Dorsolateral prefrontal cortex (tissue), 120 donors: ENCODE measurements at regions of chr6 and their contacts with region 1.

Region 1: DNA sequence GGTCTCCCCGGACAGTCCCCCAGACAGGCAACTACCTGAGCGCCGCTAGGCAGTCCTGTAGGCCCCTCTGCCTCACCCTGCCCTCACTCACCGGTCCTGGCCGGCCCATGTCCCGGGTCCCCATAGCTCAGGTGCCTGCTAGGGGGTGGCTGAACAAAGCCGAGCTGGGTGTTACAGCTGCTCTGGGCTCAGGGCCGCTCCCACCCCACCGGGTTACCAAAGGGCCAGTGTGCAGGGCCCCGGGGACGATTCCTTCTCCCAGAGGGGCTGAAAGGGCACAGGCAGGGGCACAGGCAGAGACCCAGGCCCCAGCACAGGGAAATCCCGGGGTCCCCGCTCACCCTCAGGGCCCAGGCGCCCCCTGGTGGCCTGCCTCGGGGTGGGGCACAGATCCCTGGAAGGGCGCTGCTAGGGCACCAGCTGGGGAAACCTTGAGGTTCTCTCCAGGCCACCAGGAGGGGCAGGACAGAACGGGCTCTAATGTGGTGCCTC is 118.4 kb downstream of the GRM4 start:
- DNase-seq: peak in 1 of 10 donors; percentile 59
- H3K4me3 ChIP-seq: no peak overlapping the region
- H3K27ac ChIP-seq: peak overlapping the region in 1 of 59 donors; percentile 77
- H3K27me3 ChIP-seq: peaks cover 0 to 4% (median 0%) of the 10 kb centered on the region in 45 donors
- CTCF ChIP-seq: peak; percentile 42 to 77 (median 65)

Region 2: DNA sequence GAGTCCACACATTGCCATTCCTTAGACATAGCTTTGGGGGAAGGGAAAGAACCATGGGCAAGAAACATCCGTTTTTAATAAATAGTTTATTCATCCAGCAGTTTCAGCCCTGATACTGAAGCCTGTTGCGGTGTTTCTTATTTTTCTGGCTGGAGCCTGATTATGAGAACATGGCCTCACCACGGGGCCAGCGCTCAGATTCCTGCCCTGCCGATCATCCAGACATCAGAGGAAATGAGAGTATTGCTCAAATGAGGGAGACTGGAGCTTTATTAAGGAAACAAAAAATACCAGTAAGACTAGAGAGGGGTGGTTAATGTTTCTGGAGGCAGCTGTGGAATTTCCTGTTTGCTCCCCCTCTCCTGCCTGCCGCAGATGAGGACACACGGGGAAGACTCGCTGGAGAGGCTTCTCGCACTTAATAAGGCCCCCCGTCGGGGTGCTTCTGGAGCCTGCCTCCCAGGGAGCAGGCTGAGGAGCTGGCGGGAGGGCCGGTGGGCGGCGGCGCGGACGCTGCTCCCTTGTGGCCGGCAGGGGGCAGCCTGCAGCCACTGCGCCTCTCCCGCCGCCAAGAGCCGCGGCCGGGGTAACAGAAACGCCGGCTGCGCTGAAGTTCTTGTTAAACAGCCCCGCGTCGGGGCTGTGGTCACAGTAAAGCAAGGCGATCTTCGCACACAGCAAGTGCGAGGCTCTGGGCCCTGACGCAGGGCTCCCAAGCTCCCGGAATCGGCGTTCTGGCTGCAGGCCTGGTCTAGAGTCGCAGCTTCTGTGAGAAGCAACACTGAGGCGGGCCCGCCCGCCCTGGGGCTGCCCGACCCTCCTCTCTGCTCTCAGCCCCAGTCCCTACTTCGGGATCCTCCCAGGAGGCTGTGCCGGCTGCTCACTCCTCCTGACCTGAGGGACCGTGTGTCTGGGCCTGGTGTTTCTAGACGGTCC is 256.1 kb before region 1 on chr6:
- intact Hi-C with region 1: loop called in 1 of 2 experiments (anchors 5 kb)
- DNase-seq: peak in 8 of 10 donors; percentile 32 to 83 (median 58)
- H3K4me3 ChIP-seq: peak overlapping the region in 11 of 59 donors; percentile 3 to 36 (median 15)
- H3K27ac ChIP-seq: peak overlapping the region in 53 of 59 donors; percentile 3 to 85 (median 61)
- H3K27me3 ChIP-seq: no peaks in the 10 kb centered on the region
- CTCF ChIP-seq: peak; percentile 72 to 98 (median 94)